Breast epithelium (tissue), 4 donors: ENCODE measurements at regions of chr3 and their contacts with region 1.

Region 1: GRCh38 chr3:140470962-140471361 is 206.9 kb upstream of the TRIM42 start:
- DNase-seq: no peak
- H3K4me3 ChIP-seq: no peak overlapping the region
- H3K27ac ChIP-seq: no peak overlapping the region
- H3K4me1 ChIP-seq: no peaks in the 10 kb centered on the region
- H3K27me3 ChIP-seq: no peaks in the 10 kb centered on the region
- CTCF ChIP-seq: no peak
- POLR2A ChIP-seq: no peak

Region 2: GRCh38 chr3:140363801-140364200 is 107.2 kb before region 1 on chr3:
- intact Hi-C with region 1: loop called (anchors 5 kb)
- DNase-seq: no peak
- H3K4me3 ChIP-seq: no peak overlapping the region
- H3K27ac ChIP-seq: no peak overlapping the region
- H3K4me1 ChIP-seq: no peaks in the 10 kb centered on the region
- H3K27me3 ChIP-seq: no peaks in the 10 kb centered on the region
- CTCF ChIP-seq: no peak
- POLR2A ChIP-seq: no peak